Uterus (tissue), 4 donors: ENCODE measurements at regions of chr10 and their contacts with region 1.

Region 1: DNA sequence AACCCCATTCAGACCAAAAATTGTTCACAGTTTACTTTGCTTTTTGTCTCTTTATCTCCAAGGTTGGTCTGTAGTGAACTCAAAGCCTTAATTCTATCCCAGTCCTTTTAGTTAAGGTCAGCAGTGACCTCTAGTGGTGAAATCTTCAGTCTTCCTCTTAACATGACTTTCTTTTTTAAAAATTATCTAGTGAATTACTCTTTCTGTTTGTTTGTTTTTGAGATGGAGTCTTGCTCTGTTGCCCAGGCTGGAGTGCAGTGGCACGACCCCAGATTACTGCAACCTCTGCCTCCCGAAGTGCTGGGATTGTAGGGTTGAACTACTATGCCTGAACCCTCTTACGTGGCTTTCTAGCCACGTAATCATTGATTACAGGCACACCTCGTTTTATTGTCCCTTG is 25.0 kb downstream of the ZNF487 start:
- DNase-seq: peak in 1 of 2 donors; percentile 35
- H3K4me3 ChIP-seq: no peak overlapping the region
- H3K27ac ChIP-seq: no peak overlapping the region
- H3K4me1 ChIP-seq: no peaks in the 10 kb centered on the region
- H3K27me3 ChIP-seq: no peaks in the 10 kb centered on the region
- CTCF ChIP-seq: peak; percentile 66 to 76 (median 72)
- POLR2A ChIP-seq: no peak

Region 2: DNA sequence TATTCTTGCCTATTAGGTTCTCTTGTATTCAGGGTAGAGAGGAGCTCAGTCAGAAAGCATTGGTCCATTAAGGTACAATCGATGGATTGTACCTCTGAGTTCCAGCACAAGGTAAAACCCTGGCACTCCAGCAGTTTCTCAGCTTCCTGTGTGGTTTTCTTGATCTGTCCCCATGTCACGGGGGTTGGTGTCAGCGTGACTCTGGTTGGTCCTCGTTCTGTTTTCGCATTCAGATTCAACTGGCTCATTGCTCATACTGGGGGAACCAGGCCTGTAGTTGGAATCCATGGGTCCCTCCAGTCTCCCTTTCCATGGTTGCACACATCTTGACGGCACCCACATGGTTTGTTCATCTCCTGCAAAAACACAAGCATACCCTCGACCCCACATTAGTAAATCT is 162.4 kb before region 1 on chr10:
- intact Hi-C with region 1: loop called (anchors 5 kb)
- DNase-seq: no peak
- H3K4me3 ChIP-seq: no peak overlapping the region
- H3K27ac ChIP-seq: no peak overlapping the region
- H3K4me1 ChIP-seq: no peaks in the 10 kb centered on the region
- H3K27me3 ChIP-seq: peaks cover 0 to 5% of the 10 kb centered on the region in 2 donors
- CTCF ChIP-seq: no peak
- POLR2A ChIP-seq: no peak